Ovary (tissue), 10 donors: ENCODE measurements at regions of chr3 and their contacts with region 1.

Region 1: GRCh38 chr3:9222956-9223639 is 26.3 kb downstream of the SRGAP3 start:
- DNase-seq: no peak
- H3K4me3 ChIP-seq: no peak overlapping the region
- H3K27ac ChIP-seq: no peak overlapping the region
- H3K4me1 ChIP-seq: no peaks in the 10 kb centered on the region
- H3K27me3 ChIP-seq: no peaks in the 10 kb centered on the region
- CTCF ChIP-seq: no peak
- EP300 ChIP-seq: no peak
- POLR2A ChIP-seq: no peak

Region 2: GRCh38 chr3:9205345-9206143 is 17.6 kb before region 1 on chr3:
- intact Hi-C with region 1: loop called in 1 of 4 experiments (anchors 2 kb)
- DNase-seq: no peak
- H3K4me3 ChIP-seq: no peak overlapping the region
- H3K27ac ChIP-seq: no peak overlapping the region
- H3K4me1 ChIP-seq: no peaks in the 10 kb centered on the region
- H3K27me3 ChIP-seq: no peaks in the 10 kb centered on the region
- CTCF ChIP-seq: no peak
- EP300 ChIP-seq: no peak
- POLR2A ChIP-seq: no peak

Region 3: GRCh38 chr3:9298236-9298635 is 75.1 kb after region 1 on chr3:
- intact Hi-C with region 1: no loop called
- DNase-seq: no peak
- H3K4me3 ChIP-seq: no peak overlapping the region
- H3K27ac ChIP-seq: no peak overlapping the region
- H3K4me1 ChIP-seq: no peaks in the 10 kb centered on the region
- H3K27me3 ChIP-seq: no peaks in the 10 kb centered on the region
- CTCF ChIP-seq: no peak
- EP300 ChIP-seq: no peak
- POLR2A ChIP-seq: no peak